GM12878 (cell line): ENCODE measurements at regions of chr18 and their contacts with region 1.

Region 1: GRCh38 chr18:31741097-31741735 is 19.5 kb downstream of the SLC25A52 start:
- DNase-seq: peak; percentile 16
- ATAC-seq: peak; percentile 72
- H3K4me3 ChIP-seq: no peak overlapping the region
- H3K27ac ChIP-seq: no peak overlapping the region
- H3K4me1 ChIP-seq: no peaks in the 10 kb centered on the region
- H3K27me3 ChIP-seq: no peaks in the 10 kb centered on the region
- CTCF ChIP-seq: peak; percentile 59 to 77 (median 74)
- EP300 ChIP-seq: no peak
- POLR2A ChIP-seq: no peak
- RAD21 ChIP-seq: peak; percentile 72

Region 2: DNA sequence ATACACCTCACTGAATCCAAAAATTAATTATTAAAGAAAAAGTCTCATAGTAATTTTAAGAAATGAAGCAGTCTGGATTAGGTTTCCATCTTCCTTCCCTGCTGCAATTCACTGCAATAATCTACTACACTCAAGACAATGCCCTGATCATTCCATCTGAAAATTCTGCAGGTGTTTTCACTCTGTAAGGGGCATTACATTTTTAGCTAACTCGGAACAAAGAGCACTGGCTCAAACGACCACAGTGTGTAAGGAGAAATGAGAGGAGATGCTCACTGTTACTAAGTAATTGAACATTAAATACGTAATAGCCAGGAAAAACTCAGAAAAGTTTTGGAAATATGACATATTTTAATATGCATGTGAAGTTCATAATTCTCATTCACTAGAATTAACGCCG is 58.1 kb before region 1 on chr18:
- CTCF ChIA-PET with region 1: no interaction called
- POLR2A ChIA-PET with region 1: no interaction called
- RAD21 ChIA-PET with region 1: no interaction called
- SMC1A ChIA-PET with region 1: no interaction called
- in situ Hi-C with region 1: no loop called
- intact Hi-C with region 1: no loop called
- DNase-seq: no peak
- ATAC-seq: no peak
- H3K4me3 ChIP-seq: peak overlapping the region; percentile 100
- H3K27ac ChIP-seq: peak overlapping the region; percentile 88
- H3K4me1 ChIP-seq: peaks cover 28% of the 10 kb centered on the region
- H3K27me3 ChIP-seq: no peaks in the 10 kb centered on the region
- CTCF ChIP-seq: no peak
- EP300 ChIP-seq: no peak
- POLR2A ChIP-seq: no peak
- RAD21 ChIP-seq: no peak

Region 3: DNA sequence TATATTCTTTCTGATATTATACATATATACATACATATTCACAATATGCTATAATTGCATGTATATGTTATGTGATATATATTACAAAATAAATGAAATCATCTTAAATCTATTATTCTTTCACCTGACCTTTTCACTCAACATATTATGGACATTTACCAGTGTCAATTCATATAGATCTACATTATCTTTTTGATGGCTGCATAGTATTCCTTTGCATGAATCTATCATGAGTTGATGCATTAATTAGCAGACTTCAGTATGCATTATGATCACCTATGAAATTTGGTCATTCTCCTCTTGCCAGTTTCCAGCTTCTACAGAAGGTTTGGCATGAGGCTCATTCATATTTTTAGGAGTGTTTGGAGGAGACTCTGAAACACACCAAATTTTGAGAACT is 33.4 kb before region 1 on chr18:
- CTCF ChIA-PET with region 1: no interaction called
- POLR2A ChIA-PET with region 1: no interaction called
- RAD21 ChIA-PET with region 1: no interaction called
- SMC1A ChIA-PET with region 1: no interaction called
- in situ Hi-C with region 1: no loop called
- intact Hi-C with region 1: no loop called
- DNase-seq: no peak
- ATAC-seq: no peak
- H3K4me3 ChIP-seq: no peak overlapping the region
- H3K27ac ChIP-seq: no peak overlapping the region
- H3K4me1 ChIP-seq: no peaks in the 10 kb centered on the region
- H3K27me3 ChIP-seq: no peaks in the 10 kb centered on the region
- CTCF ChIP-seq: no peak
- EP300 ChIP-seq: no peak
- POLR2A ChIP-seq: no peak
- RAD21 ChIP-seq: no peak

Region 4: DNA sequence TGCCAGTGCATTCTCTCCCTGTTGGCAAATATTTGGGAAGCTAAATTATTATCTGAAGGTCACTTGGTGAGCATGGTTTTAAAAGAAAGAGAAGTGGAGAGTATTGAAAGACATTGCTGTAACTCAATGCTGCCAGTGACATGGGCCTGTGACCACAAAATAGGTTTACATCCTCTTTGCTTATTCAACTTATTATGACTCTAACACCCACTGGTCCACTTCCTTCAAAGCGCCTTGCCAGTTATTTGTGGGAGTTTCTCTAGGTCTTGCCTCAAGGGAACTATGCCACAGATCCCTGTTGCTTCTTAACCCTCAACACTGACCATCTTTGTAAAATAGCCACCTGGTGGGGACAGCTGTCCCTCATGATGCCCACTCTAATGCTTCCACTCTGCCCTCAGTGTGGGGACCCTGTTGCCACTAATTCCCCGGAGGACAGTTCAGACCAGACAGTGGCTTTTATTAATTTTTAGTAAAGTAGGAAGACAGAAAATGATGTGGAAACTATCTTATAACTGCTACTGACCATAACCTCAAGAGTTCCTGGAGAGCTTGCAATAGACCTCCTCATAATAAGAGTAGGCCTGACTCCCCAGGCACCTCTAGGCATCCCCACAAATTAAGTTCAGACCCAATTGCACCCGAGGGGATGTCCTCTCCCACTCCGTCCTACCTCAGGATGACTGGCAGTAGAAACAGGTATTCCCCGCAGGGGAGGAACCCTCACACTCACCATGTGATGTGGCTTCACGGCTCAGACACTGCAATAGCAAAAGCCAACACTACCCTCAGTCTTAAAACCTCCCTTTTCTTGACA is 50.8 kb after region 1 on chr18:
- CTCF ChIA-PET with region 1: interaction called, 4 read pairs
- POLR2A ChIA-PET with region 1: no interaction called
- RAD21 ChIA-PET with region 1: no interaction called
- SMC1A ChIA-PET with region 1: interaction called, 4 read pairs
- in situ Hi-C with region 1: no loop called
- intact Hi-C with region 1: loop called (anchors 2 kb)
- DNase-seq: peak; percentile 76
- ATAC-seq: peak; percentile 92
- H3K4me3 ChIP-seq: no peak overlapping the region
- H3K27ac ChIP-seq: peak overlapping the region; percentile 58; the same call in 1 of the 2 replicates
- H3K4me1 ChIP-seq: peaks cover 21% of the 10 kb centered on the region
- H3K27me3 ChIP-seq: no peaks in the 10 kb centered on the region
- CTCF ChIP-seq: no peak
- EP300 ChIP-seq: peak; percentile 50 to 82; a peak in 3 of 4 replicates
- POLR2A ChIP-seq: no peak
- RAD21 ChIP-seq: no peak

Region 5: DNA sequence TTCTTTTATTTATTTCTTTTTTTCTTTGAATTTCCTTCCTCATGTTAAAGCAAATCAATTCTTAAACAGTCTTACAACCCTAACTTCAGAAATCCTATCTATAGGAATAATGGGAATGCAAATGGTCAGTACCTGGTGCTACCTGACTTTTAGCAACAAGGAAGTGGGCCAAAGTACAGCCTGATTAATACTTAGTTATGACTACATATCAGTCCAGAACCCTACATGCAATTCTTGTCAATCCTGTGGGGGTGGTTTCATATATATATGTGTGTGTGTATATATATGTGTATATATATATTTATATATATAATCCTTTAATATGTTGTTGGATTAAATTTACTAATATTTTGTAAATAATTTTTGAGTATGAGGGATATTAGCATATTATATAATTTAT is 216.5 kb after region 1 on chr18:
- CTCF ChIA-PET with region 1: interaction called, 3 read pairs
- POLR2A ChIA-PET with region 1: no interaction called
- RAD21 ChIA-PET with region 1: interaction called, 6 read pairs
- SMC1A ChIA-PET with region 1: interaction called, 3 read pairs
- in situ Hi-C with region 1: no loop called
- intact Hi-C with region 1: loop called (anchors 5 kb)
- DNase-seq: no peak
- ATAC-seq: peak; percentile 49; the same call in 1 of the 3 replicates
- H3K4me3 ChIP-seq: no peak overlapping the region
- H3K27ac ChIP-seq: no peak overlapping the region
- H3K4me1 ChIP-seq: no peaks in the 10 kb centered on the region
- H3K27me3 ChIP-seq: no peaks in the 10 kb centered on the region
- CTCF ChIP-seq: no peak
- EP300 ChIP-seq: no peak
- POLR2A ChIP-seq: no peak
- RAD21 ChIP-seq: no peak